OCI-LY7 (cell line): ENCODE measurements at regions of chr12 and their contacts with region 1.

Region 1: DNA sequence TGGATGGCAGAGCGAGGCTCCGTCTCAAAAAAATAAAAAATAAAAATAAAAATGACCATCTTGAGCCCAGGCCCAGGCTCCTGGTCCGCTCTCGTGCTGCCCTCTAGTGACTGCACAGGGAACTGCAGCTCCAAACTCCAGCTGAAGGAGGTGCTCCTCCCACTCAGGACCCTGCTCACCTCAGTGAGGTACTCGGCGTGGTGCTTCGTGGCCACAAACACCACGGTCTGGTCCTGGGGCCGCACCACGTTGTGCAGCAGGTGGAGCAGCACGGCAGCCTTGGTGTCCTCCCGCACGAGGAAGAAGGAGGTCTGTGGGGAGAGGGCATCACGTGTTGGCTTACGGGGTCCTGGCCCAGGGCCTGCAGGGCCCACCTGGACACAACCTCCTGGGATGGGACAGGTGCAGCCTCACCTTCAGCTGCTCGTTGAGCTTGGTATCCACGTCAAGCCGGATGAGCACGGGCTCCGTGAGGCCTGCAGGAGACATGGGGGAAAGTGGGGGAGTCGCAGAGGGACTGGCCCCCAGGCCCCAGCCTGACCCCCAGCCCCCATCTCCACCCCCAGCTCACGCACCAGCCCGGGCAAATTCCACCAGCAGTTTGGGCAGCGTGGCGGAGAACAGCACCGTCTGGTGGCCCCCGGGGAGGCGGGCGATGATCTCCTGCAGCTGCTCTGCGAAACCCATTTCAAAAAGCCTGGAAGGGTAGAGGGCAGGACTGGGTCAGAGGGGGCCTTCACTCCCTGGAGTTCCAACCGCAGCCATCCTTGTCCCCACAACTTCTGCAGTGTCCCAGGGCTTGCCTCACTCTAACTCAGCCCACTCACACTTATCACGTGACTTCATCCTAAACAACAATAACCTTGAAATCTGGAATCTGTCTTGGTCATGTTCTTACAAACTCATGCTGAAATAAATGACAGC is 10.6 kb downstream of the DDX54 start:
- DNase-seq: peak; percentile 84
- H3K4me3 ChIP-seq: peak overlapping the region; percentile 10
- H3K27ac ChIP-seq: peak overlapping the region; percentile 98
- H3K4me1 ChIP-seq: peaks cover 46% of the 10 kb centered on the region
- CTCF ChIP-seq: peak; percentile 94

Region 2: DNA sequence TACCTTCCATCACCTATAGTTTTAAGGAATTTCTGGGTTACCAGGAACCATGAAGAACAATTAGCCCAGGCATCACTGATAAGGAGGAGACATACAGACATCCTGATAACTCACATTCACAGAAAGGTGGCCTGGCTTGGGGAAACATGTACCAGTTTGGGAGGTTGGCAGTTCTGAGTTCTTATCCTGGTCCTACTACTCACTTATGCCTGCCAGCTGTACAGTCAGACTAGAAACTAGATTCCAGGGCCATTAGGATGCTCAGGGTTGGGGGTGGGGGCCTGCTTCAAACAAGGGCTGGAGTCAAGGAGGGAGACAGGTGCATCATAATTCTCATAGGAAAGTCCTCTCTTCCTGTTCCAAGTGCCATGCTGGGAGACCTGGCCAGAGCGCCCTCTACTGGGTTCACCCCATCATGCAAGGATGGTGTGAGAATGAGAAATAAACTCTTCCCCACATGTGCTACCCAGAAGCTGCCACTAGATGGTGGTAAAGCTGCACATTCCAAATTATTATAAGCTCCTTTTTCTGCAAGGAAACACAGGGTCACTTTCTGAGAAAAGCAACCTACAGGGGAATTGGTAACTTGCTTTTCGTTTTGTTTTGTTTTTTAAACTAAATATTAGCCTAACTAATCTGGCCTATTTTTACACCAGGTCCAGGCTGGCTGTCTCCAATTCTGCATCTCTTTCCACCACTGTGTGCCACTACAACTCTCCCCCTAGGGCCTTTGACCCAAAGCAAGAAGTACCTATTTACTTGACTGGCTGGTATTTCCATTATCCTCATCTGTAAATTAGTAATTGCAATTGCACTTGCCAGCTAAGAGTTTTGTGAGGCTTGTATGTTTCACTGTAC is 182.0 kb before region 1 on chr12:
- CTCF ChIA-PET with region 1: interaction called, 4 read pairs
- POLR2A ChIA-PET with region 1: interaction called, 11 read pairs
- intact Hi-C with region 1: loop called (anchors 1 kb)
- DNase-seq: peak; percentile 82
- H3K4me3 ChIP-seq: no peak overlapping the region
- H3K27ac ChIP-seq: peak overlapping the region; percentile 47
- H3K4me1 ChIP-seq: peaks cover 30% of the 10 kb centered on the region
- CTCF ChIP-seq: peak; percentile 100

Region 3: GRCh38 chr12:113048716-113049127 is 126.0 kb before region 1 on chr12:
- CTCF ChIA-PET with region 1: interaction called, 3 read pairs
- POLR2A ChIA-PET with region 1: interaction called, 12 read pairs
- intact Hi-C with region 1: loop called (anchors 1 kb)
- DNase-seq: peak; percentile 91
- H3K4me3 ChIP-seq: no peak overlapping the region
- H3K27ac ChIP-seq: peak overlapping the region; percentile 97
- H3K4me1 ChIP-seq: peaks cover 73% of the 10 kb centered on the region
- CTCF ChIP-seq: peak; percentile 96

Region 4: DNA sequence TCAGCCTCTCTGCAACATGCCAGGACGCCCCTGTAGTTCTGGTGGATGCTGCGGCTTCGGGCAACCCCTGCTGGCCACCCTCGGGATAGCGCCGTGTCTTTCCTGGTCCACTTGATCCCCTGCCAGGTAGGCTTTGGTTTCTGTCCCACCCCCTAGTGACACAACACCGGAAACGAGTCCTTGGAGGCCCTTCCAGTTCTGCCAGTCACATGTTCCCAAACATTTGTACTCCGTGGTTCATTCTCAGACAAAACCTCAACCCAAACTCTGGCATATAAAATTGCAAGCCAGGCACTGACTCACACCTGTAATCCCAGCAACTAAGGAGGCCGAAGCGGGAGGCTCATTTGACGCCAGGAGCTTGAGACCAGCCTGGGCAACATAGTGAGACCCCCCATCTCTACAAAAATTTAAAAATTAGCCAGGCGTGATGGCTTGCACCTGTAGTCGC is 76.3 kb before region 1 on chr12:
- CTCF ChIA-PET with region 1: interaction called, 4 read pairs
- POLR2A ChIA-PET with region 1: interaction called, 4 read pairs
- intact Hi-C with region 1: loop called (anchors 1 kb)
- DNase-seq: peak; percentile 82
- H3K4me3 ChIP-seq: no peak overlapping the region
- H3K27ac ChIP-seq: peak overlapping the region; percentile 88
- H3K4me1 ChIP-seq: peaks cover 75% of the 10 kb centered on the region
- CTCF ChIP-seq: peak; percentile 91

Region 5: GRCh38 chr12:113135178-113136127 is 39.3 kb before region 1 on chr12 and contains the start of gene RASAL1:
- CTCF ChIA-PET with region 1: interaction called, 10 read pairs
- POLR2A ChIA-PET with region 1: interaction called, 12 read pairs
- intact Hi-C with region 1: loop called (anchors 2 kb)
- DNase-seq: peak; percentile 93
- H3K4me3 ChIP-seq: peak within 1 kb of the TSS; percentile 90
- H3K27ac ChIP-seq: peak within 1 kb of the TSS; percentile 68
- H3K4me1 ChIP-seq: peaks cover 68% of the 10 kb centered on the region
- CTCF ChIP-seq: peak; percentile 78
- total RNA-seq, gene RASAL1: 69.1 and 89.1 TPM in 2 replicates

Region 6: DNA sequence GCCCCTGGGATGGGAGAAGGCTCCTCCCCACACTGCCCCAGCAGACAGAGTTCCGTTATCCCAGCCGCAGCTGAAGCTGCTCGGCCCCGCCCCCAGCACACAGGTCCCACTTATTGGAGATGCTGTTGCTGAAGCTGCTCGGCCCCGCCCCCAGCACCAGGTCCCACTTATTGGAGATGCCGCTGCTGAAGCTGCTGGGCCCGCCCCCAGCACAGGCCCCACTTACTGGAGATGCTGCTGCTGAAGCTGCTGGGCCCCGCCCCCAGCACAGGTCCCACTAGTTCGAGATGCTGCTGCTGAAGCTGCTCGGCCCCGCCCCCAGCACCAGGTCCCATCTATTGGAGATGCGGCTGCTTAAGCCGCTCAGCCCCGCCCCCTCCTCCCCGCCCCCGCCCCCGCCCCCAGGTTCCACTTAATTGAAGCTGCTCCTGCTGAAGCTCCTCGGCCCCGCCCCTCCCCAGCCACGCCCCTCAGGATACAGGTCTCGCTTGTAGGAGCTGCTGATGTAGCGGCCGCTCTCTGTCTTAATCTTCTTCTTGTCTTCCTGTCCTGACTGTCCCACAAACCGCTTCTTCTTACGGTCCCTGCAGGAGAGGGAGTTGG is 13.2 kb before region 1 on chr12:
- CTCF ChIA-PET with region 1: interaction called, 9 read pairs
- POLR2A ChIA-PET with region 1: interaction called, 46 read pairs
- intact Hi-C with region 1: no loop called
- DNase-seq: peak; percentile 99
- H3K4me3 ChIP-seq: peak overlapping the region; percentile 48
- H3K27ac ChIP-seq: peak overlapping the region; percentile 77
- H3K4me1 ChIP-seq: peaks cover 52% of the 10 kb centered on the region
- CTCF ChIP-seq: no peak

Region 7: DNA sequence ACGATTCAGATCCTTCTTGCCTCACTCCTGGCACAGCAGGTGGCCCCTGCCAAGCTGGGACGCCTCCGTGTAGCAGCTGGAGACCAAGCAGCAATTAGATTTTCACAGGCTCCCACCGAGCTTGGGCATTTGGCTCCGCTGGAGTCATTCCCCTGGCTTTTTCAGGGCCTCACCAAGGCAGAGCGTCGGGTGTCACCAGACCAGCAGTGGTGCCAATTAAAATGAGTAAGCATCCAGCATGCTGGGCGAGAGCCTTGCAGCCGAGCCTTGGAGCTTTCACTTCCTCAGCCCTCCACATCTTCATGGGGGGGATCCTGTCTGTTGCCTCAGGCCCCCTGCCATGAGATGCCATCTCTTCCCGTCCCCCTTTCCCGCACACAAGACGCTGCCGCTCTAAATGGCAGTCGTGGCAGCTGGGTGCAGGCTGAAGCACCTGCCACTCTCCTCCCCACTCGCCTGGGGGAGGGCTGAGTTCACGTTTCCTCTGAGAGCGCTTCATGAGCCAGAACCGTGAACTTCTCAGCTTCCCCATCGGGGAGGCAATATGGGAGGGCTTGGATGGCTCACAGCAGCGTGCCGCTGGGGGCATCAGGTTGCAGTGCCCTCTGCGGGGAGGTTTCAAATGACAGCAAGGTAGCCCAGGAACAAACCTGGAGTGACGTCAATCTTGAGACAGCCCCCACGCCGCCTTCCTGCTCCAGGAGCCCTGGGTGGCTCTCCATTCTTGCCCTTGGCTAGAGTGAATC is 58.3 kb after region 1 on chr12:
- CTCF ChIA-PET with region 1: no interaction called
- POLR2A ChIA-PET with region 1: no interaction called
- intact Hi-C with region 1: no loop called
- DNase-seq: peak; percentile 94
- H3K4me3 ChIP-seq: peak overlapping the region; percentile 19
- H3K27ac ChIP-seq: peak overlapping the region; percentile 74
- H3K4me1 ChIP-seq: peaks cover 62% of the 10 kb centered on the region
- CTCF ChIP-seq: peak; percentile 76